ENCODE measurements at regions of chr2 and their contacts with region 1.

Region 1: DNA sequence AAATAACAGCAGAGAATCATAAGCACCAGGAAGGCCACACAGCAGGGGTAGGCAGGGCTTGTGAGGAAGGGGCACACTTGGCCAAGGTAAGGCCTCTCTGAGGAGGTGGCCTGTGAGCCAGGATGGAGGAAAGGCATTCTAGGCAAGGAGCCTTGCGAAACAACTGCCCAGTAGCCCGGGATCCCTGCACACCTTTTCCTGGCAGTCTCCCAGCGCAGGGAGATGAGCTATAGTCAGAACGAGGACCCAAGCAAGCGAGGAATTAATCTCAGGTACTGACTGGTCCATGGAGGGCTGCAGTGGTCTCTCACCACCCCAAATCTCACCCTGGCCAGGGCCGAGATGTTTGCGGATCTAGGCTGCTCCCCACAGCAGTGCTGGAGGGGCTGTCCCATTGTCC is 64.9 kb upstream of the STPG4 start:
- DNase-seq: no peak
- ATAC-seq: peak; percentile 13; the same call in 1 of the 3 replicates
- H3K4me3 ChIP-seq: no peak overlapping the region
- H3K27ac ChIP-seq: no peak overlapping the region
- H3K4me1 ChIP-seq: peaks cover 44% of the 10 kb centered on the region
- H3K27me3 ChIP-seq: peaks cover 1 to 17% of the 10 kb centered on the region in 2 experiments; a peak in 2 of 5 replicates
- CTCF ChIP-seq: no peak
- EP300 ChIP-seq: no peak
- POLR2A ChIP-seq: no peak
- RAD21 ChIP-seq: no peak

Region 2: GRCh38 chr2:47189635-47190034 is 30.3 kb before region 1 on chr2:
- CTCF ChIA-PET with region 1: no interaction called
- POLR2A ChIA-PET with region 1: no interaction called
- in situ Hi-C with region 1: no loop called
- intact Hi-C with region 1: loop called (anchors 1 kb)
- DNase-seq: no peak
- ATAC-seq: no peak
- H3K4me3 ChIP-seq: no peak overlapping the region
- H3K27ac ChIP-seq: no peak overlapping the region
- H3K4me1 ChIP-seq: peaks cover 47% of the 10 kb centered on the region
- H3K27me3 ChIP-seq: no peaks in the 10 kb centered on the region; a peak in 3 of 5 replicates
- CTCF ChIP-seq: no peak
- EP300 ChIP-seq: no peak
- POLR2A ChIP-seq: no peak
- RAD21 ChIP-seq: no peak

Measured in HepG2 (cell line).